ENCODE measurements at regions of chr3 and their contacts with region 1.

Region 1: DNA sequence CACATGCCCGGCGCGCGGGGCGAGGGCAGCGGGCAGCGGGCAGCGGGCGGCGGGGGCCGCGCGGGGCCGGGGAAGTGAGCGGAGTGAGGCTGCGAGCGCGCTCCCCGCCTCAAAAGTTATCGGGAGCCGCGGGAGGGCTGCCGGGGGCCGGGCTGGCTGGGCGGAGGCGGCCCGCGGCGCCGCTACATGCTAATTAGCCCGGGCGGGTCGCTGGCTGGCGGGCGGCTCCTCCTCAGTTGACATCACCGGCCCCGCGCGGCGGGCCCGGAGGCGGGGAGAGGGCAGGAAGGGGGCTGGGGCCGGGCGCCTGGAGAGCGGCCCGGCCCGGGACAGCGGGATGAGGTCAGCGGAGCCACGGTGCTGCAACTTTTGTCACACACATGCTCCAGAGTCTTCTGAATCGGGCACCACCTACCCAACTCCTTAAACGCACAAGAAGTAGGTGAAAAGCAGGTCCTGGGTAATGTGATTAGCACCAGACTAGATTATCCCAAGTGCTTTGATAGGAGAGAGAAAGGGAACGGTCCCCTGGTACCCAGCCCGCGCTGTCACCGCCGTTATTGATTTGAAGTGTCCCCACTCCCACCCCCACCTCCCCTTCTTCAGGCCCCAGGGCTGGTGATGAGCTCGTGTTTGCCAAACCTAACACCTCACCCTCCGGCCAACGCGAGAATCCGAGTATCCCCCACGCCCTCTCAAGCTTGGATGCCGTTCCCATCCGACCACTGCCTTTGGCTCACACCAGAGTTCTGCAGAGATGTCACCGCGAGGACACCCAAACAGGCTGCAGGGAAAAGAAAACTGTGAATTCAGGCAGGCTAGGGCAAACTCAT is at the start of gene HEG1:
- DNase-seq: peak; percentile 47 to 87 (median 77)
- ATAC-seq: peak; percentile 61
- H3K4me3 ChIP-seq: peak within 1 kb of the TSS; percentile 70 to 78
- H3K4me3 Mint-ChIP-seq: peak within 1 kb of the TSS; percentile 96
- H3K27ac ChIP-seq: peak within 1 kb of the TSS; percentile 62 to 69
- H3K27ac Mint-ChIP-seq: peak within 1 kb of the TSS; percentile 89
- H3K4me1 ChIP-seq: peaks cover 39% of the 10 kb centered on the region
- H3K4me1 Mint-ChIP-seq: peaks cover 41% of the 10 kb centered on the region
- H3K27me3 ChIP-seq: no peaks in the 10 kb centered on the region
- H3K27me3 Mint-ChIP-seq: peaks cover 10% of the 10 kb centered on the region
- CTCF ChIP-seq: no peak
- total RNA-seq, gene HEG1: 20.8 to 21.5 TPM

Region 2: DNA sequence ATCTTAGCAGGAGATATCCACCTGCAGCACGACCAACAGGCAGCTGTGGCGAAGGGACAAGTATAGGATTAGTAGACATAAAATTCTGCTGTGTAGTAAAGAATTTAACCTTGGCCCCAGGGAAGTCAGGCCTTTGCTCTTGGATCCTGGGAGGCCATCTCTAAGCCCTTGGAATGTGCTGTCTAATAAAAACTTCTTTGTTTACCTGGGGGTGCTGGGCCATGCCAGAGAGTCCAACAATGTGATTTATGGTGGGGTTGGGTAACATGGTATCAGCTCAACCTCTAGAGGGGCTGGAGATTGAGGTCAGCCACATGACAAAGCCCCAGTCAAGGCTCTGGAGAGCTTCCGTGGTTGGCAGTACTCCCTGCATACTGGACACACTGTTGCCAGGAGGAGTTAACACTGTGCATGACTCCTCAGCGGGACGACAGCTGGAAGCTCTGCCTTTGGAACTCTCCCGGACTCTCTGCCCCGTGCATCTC is 52.7 kb before region 1 on chr3:
- CTCF ChIA-PET with region 1: interaction called, 3 read pairs
- POLR2A ChIA-PET with region 1: interaction called, 4 read pairs
- intact Hi-C with region 1: loop called in 1 of 2 experiments (anchors 5 kb)
- DNase-seq: no peak
- ATAC-seq: no peak
- H3K4me3 ChIP-seq: no peak overlapping the region
- H3K4me3 Mint-ChIP-seq: no peak overlapping the region
- H3K27ac ChIP-seq: no peak overlapping the region
- H3K27ac Mint-ChIP-seq: no peak overlapping the region
- H3K4me1 ChIP-seq: peaks cover 17% of the 10 kb centered on the region
- H3K4me1 Mint-ChIP-seq: peaks cover 21% of the 10 kb centered on the region
- H3K27me3 ChIP-seq: no peaks in the 10 kb centered on the region
- H3K27me3 Mint-ChIP-seq: no peaks in the 10 kb centered on the region
- CTCF ChIP-seq: no peak

Region 3: GRCh38 chr3:125119752-125120378 is 63.7 kb after region 1 on chr3:
- CTCF ChIA-PET with region 1: interaction called, 3 read pairs
- POLR2A ChIA-PET with region 1: interaction called, 3 read pairs
- intact Hi-C with region 1: loop called (anchors 5 kb)
- DNase-seq: peak in 4 of 9 experiments; percentile 31 to 68 (median 56)
- ATAC-seq: peak; percentile 68
- H3K4me3 ChIP-seq: peak overlapping the region in 1 of 2 experiments; percentile 12
- H3K4me3 Mint-ChIP-seq: peak overlapping the region; percentile 59
- H3K27ac ChIP-seq: peak overlapping the region; percentile 11 to 74
- H3K27ac Mint-ChIP-seq: peak overlapping the region; percentile 71
- H3K4me1 ChIP-seq: peaks cover 47% of the 10 kb centered on the region
- H3K4me1 Mint-ChIP-seq: peaks cover 50% of the 10 kb centered on the region
- H3K27me3 ChIP-seq: no peaks in the 10 kb centered on the region
- H3K27me3 Mint-ChIP-seq: no peaks in the 10 kb centered on the region
- CTCF ChIP-seq: no peak

Region 4: GRCh38 chr3:125357032-125357658 is 301.0 kb after region 1 on chr3:
- CTCF ChIA-PET with region 1: no interaction called
- POLR2A ChIA-PET with region 1: no interaction called
- intact Hi-C with region 1: loop called in 1 of 2 experiments (anchors 5 kb)
- DNase-seq: peak in 8 of 9 experiments; percentile 35 to 82 (median 66)
- ATAC-seq: peak; percentile 97
- H3K4me3 ChIP-seq: peak overlapping the region; percentile 58 to 60
- H3K4me3 Mint-ChIP-seq: peak overlapping the region; percentile 92
- H3K27ac ChIP-seq: peak overlapping the region; percentile 55 to 64
- H3K27ac Mint-ChIP-seq: peak overlapping the region; percentile 97
- H3K4me1 ChIP-seq: peaks cover 24% of the 10 kb centered on the region
- H3K4me1 Mint-ChIP-seq: peaks cover 75% of the 10 kb centered on the region
- H3K27me3 ChIP-seq: no peaks in the 10 kb centered on the region
- H3K27me3 Mint-ChIP-seq: no peaks in the 10 kb centered on the region
- CTCF ChIP-seq: no peak

Region 5: GRCh38 chr3:125462722-125463299 is 406.7 kb after region 1 on chr3:
- CTCF ChIA-PET with region 1: no interaction called
- POLR2A ChIA-PET with region 1: no interaction called
- intact Hi-C with region 1: loop called in 1 of 2 experiments (anchors 5 kb)
- DNase-seq: no peak
- ATAC-seq: no peak
- H3K4me3 ChIP-seq: no peak overlapping the region
- H3K4me3 Mint-ChIP-seq: no peak overlapping the region
- H3K27ac ChIP-seq: no peak overlapping the region
- H3K27ac Mint-ChIP-seq: no peak overlapping the region
- H3K4me1 ChIP-seq: no peaks in the 10 kb centered on the region
- H3K4me1 Mint-ChIP-seq: no peaks in the 10 kb centered on the region
- H3K27me3 ChIP-seq: no peaks in the 10 kb centered on the region
- H3K27me3 Mint-ChIP-seq: no peaks in the 10 kb centered on the region
- CTCF ChIP-seq: no peak

Region 6: GRCh38 chr3:126156477-126156876 is 1100.3 kb after region 1 on chr3:
- CTCF ChIA-PET with region 1: no interaction called
- POLR2A ChIA-PET with region 1: no interaction called
- intact Hi-C with region 1: no loop called
- DNase-seq: no peak
- ATAC-seq: no peak
- H3K4me3 ChIP-seq: no peak overlapping the region
- H3K4me3 Mint-ChIP-seq: no peak overlapping the region
- H3K27ac ChIP-seq: no peak overlapping the region
- H3K27ac Mint-ChIP-seq: no peak overlapping the region
- H3K4me1 ChIP-seq: no peaks in the 10 kb centered on the region
- H3K4me1 Mint-ChIP-seq: no peaks in the 10 kb centered on the region
- H3K27me3 ChIP-seq: no peaks in the 10 kb centered on the region
- H3K27me3 Mint-ChIP-seq: peaks cover 6% of the 10 kb centered on the region
- CTCF ChIP-seq: no peak

Measured in CD8-positive, alpha-beta T cell (primary cell).